Sigmoid colon (tissue), 7 donors: ENCODE measurements at regions of chr18 and their contacts with region 1.

Region 1: GRCh38 chr18:3665780-3666525 is 216.0 kb downstream of the TGIF1 start:
- DNase-seq: peak; percentile 91
- H3K4me3 ChIP-seq: peak overlapping the region in 3 of 4 donors; percentile 26 to 37 (median 34)
- H3K27ac ChIP-seq: peak overlapping the region; percentile 64 to 76 (median 68)
- H3K4me1 ChIP-seq: peaks cover 0 to 11% (median 7%) of the 10 kb centered on the region in 4 donors
- H3K27me3 ChIP-seq: no peaks in the 10 kb centered on the region
- CTCF ChIP-seq: peak; percentile 83 to 96 (median 90)
- EP300 ChIP-seq: no peak
- POLR2A ChIP-seq: no peak

Region 2: GRCh38 chr18:3281456-3282400 is 384.2 kb before region 1 on chr18:
- intact Hi-C with region 1: loop called (anchors 1 kb)
- DNase-seq: no peak
- H3K4me3 ChIP-seq: no peak overlapping the region
- H3K27ac ChIP-seq: peak overlapping the region in 3 of 4 donors; percentile 24 to 36 (median 34)
- H3K4me1 ChIP-seq: no peaks in the 10 kb centered on the region
- H3K27me3 ChIP-seq: no peaks in the 10 kb centered on the region
- CTCF ChIP-seq: peak; percentile 42 to 61 (median 53)
- EP300 ChIP-seq: no peak
- POLR2A ChIP-seq: no peak

Region 3: GRCh38 chr18:3454365-3455089 is 211.4 kb before region 1 on chr18:
- intact Hi-C with region 1: loop called (anchors 5 kb)
- DNase-seq: no peak
- H3K4me3 ChIP-seq: peak overlapping the region in 3 of 4 donors; percentile 67 to 81 (median 74)
- H3K27ac ChIP-seq: peak overlapping the region; percentile 97 to 100 (median 99)
- H3K4me1 ChIP-seq: peaks cover 0 to 55% (median 33%) of the 10 kb centered on the region in 4 donors
- H3K27me3 ChIP-seq: no peaks in the 10 kb centered on the region
- CTCF ChIP-seq: peak in 3 of 4 experiments; percentile 69 to 73 (median 71)
- EP300 ChIP-seq: no peak
- POLR2A ChIP-seq: no peak

Region 4: DNA sequence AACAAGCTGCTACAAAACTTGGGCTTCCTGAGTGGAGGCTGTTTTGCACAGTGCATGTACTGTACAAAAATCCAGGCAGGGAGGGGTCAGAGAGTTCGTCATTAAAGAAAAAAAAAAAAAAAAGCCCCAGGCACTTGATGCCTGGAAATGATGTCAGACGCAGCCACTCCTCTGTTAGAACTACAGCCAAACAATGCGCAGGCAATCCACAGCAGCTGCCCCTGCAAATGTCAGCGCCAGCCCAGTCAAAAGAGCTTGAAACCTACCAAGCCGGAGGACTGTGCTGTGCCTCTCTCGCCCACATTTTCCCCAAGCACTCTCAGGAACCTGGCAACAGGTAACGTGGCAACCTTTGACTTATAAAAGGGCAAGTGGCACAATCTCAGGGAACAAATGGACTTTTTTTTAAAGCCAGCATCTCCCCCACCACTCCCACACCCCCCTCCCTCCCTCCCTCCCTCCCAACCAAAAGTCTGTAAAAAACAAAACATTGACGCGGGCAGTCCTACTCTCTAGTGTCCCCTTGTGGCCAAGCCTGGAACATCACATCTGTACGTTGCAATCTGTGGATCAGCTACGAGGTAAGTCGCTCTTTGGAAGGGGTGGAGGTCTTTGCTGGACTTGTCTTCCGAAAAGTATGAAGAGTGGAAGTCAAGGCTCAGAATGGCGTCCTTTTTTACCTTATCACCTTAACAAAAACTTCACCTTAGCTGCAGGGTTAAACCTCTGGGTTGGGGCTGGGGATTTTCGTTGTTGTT is 71.9 kb before region 1 on chr18:
- intact Hi-C with region 1: loop called (anchors 2 kb)
- DNase-seq: peak; percentile 95
- H3K4me3 ChIP-seq: peak overlapping the region; percentile 28 to 51 (median 48)
- H3K27ac ChIP-seq: peak overlapping the region; percentile 87 to 98 (median 94)
- H3K4me1 ChIP-seq: peaks cover 0 to 53% (median 44%) of the 10 kb centered on the region in 4 donors
- H3K27me3 ChIP-seq: no peaks in the 10 kb centered on the region
- CTCF ChIP-seq: peak; percentile 74 to 95 (median 92)
- EP300 ChIP-seq: peak; percentile 44 to 91 (median 68)
- POLR2A ChIP-seq: peak in 1 of 2 donors; percentile 71

Region 5: GRCh38 chr18:3604498-3605408 is 61.2 kb before region 1 on chr18:
- intact Hi-C with region 1: loop called (anchors 5 kb)
- DNase-seq: peak; percentile 63
- H3K4me3 ChIP-seq: peak overlapping the region; percentile 6 to 45 (median 40)
- H3K27ac ChIP-seq: peak overlapping the region; percentile 84 to 88 (median 86)
- H3K4me1 ChIP-seq: peaks cover 0 to 40% (median 29%) of the 10 kb centered on the region in 4 donors
- H3K27me3 ChIP-seq: no peaks in the 10 kb centered on the region
- CTCF ChIP-seq: no peak
- EP300 ChIP-seq: peak in 2 of 4 donors; percentile 31 to 33
- POLR2A ChIP-seq: no peak

Region 6: DNA sequence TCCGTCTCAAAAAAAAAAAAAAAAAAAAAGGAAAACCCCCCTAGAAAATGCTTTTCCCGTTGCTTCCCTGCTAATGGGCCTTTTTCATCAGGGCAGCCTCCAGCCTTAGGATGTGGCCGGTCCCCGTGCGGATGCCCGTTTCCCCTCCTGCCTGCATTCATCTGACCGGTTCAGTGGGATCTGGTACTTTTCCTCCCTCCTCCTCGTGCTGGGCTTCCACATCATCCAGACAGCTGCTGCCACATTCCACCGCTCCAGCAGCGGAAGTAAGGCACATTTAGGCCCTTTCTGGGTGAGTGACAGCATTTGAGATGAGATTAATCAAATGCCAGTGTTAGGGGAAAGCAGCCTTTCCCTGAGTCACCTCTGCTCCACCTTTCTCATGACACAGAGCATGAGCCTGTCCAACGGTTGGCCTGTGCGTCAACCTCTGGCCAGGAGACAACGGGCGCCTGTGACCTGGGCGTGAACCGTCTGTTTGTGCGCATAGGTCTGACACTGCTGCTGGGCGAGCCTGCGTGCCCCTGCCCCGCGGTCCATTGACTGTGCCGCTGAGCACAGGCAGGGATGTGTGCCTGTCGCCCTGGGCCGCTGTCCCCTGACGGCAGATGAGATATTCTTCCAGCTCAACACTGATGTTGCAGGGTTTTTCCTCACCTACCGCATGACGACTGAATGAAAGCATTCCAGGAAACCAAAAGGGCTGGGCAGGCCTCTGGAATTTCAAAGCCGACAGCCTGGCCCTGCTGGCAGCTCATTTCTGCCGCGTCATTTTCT is 42.0 kb before region 1 on chr18:
- intact Hi-C with region 1: loop called (anchors 5 kb)
- DNase-seq: peak; percentile 86
- H3K4me3 ChIP-seq: no peak overlapping the region
- H3K27ac ChIP-seq: peak overlapping the region; percentile 72 to 88 (median 84)
- H3K4me1 ChIP-seq: peaks cover 0 to 40% (median 33%) of the 10 kb centered on the region in 4 donors
- H3K27me3 ChIP-seq: no peaks in the 10 kb centered on the region
- CTCF ChIP-seq: no peak
- EP300 ChIP-seq: peak in 2 of 4 donors; percentile 3 to 21
- POLR2A ChIP-seq: peak in 1 of 2 donors; percentile 34